Ascending aorta (tissue), 2 donors: ENCODE measurements at regions of chr16 and their contacts with region 1.

Region 1: GRCh38 chr16:22757202-22757601 is 56.8 kb upstream of the HS3ST2 start:
- DNase-seq: no peak
- H3K4me3 ChIP-seq: no peak overlapping the region
- H3K27ac ChIP-seq: no peak overlapping the region
- H3K4me1 ChIP-seq: no peaks in the 10 kb centered on the region
- H3K27me3 ChIP-seq: no peaks in the 10 kb centered on the region
- CTCF ChIP-seq: no peak

Region 2: DNA sequence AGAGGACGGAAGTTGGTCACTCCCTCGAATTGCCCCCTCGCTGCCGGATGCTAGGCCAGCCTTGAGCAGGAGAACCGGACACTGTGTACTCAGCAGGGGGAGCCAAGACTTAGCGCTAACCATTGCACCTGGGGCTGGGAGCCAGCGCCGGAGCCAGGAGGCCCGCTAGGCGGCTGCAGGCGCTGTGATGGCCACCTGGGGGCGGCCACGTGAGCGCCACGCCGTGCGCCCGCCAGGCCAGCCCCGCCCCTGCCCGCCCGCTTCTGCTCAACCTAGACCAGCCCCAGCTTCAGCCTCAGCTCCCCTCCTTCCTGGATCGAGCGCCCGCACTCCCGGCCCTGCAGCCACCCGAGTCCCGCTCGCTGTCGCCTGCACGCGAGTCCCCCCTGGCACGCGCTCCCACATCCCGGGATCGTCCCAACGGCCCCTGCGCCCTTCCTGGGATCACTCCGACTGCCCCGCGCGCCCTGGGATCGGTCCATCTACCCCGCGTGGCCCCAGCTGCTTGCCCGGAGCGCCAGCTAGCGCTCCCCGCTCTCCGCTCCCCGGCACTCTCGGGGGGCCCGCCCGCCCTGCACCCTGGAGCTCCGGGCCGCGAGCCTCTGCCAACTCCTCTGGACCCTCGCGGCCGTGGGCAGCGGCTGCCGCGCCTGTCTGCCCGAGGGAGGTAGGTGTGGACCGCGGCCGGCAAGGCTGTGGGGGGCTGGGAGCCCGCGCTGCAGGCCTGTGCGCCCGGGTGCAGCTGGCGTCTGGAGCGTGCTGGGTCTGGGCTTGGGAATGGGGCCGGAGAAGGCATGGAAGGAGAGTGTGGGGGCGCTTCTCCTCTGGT is 551.0 kb before region 1 on chr16 and contains the start of gene EEF2K:
- intact Hi-C with region 1: no loop called
- DNase-seq: peak; percentile 79 to 97
- H3K4me3 ChIP-seq: peak within 1 kb of the TSS; percentile 74 to 85
- H3K27ac ChIP-seq: peak within 1 kb of the TSS; percentile 87 to 88
- H3K4me1 ChIP-seq: peaks cover 3 to 44% of the 10 kb centered on the region in 2 donors
- H3K27me3 ChIP-seq: no peaks in the 10 kb centered on the region
- CTCF ChIP-seq: peak; percentile 70 to 98 (median 84)
- total RNA-seq, gene EEF2K: 31.9 TPM

Region 3: DNA sequence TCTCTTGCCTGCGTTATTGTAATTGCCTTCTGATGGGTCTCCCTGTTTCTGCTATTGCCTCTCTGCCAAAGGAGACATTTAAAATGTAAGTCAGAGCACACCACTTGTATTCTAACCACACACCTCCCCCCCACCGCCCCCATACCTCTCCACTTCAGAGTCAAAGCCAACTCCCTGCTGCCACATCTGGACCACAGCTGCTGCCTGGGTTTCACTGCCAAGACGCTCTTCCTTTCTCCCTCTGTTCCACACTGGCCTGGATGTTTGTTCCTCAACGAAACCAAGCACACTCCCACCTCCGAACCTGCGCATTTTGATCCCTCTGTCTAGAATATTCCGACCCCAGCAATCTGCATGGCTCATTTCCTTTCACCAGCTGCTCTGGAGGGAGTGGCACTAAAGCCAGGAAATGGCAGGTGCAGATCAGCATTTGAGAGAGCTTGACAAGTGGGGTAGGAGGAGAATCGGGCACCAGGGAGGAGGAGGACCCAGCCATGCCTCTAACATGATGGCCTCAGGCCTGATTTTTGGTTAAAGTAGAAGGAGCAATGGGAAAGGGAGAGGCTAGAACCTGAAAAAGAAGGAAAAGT is 35.6 kb before region 1 on chr16:
- intact Hi-C with region 1: loop called (anchors 1 kb)
- DNase-seq: no peak
- H3K4me3 ChIP-seq: no peak overlapping the region
- H3K27ac ChIP-seq: no peak overlapping the region
- H3K4me1 ChIP-seq: no peaks in the 10 kb centered on the region
- H3K27me3 ChIP-seq: no peaks in the 10 kb centered on the region
- CTCF ChIP-seq: no peak

Region 4: GRCh38 chr16:24085666-24086065 is 1328.5 kb after region 1 on chr16:
- intact Hi-C with region 1: no loop called
- DNase-seq: no peak
- H3K4me3 ChIP-seq: no peak overlapping the region
- H3K27ac ChIP-seq: no peak overlapping the region
- H3K4me1 ChIP-seq: no peaks in the 10 kb centered on the region
- H3K27me3 ChIP-seq: no peaks in the 10 kb centered on the region
- CTCF ChIP-seq: no peak